Gastrocnemius medialis (tissue), 4 donors: ENCODE measurements at regions of chr11 and their contacts with region 1.

Region 1: GRCh38 chr11:93895106-93895862 is 44.9 kb upstream of the VSTM5 start:
- DNase-seq: no peak
- ATAC-seq: no peak
- H3K4me3 ChIP-seq: no peak overlapping the region
- H3K27ac ChIP-seq: no peak overlapping the region
- H3K4me1 ChIP-seq: no peaks in the 10 kb centered on the region
- H3K27me3 ChIP-seq: no peaks in the 10 kb centered on the region
- CTCF ChIP-seq: peak in 3 of 5 experiments; percentile 39 to 55 (median 45)
- POLR2A ChIP-seq: no peak

Region 2: GRCh38 chr11:94417386-94417987 is 522.2 kb after region 1 on chr11:
- in situ Hi-C with region 1: loop called in 1 of 4 experiments (anchors 25 kb)
- intact Hi-C with region 1: no loop called
- DNase-seq: no peak
- ATAC-seq: no peak
- H3K4me3 ChIP-seq: no peak overlapping the region
- H3K27ac ChIP-seq: no peak overlapping the region
- H3K4me1 ChIP-seq: no peaks in the 10 kb centered on the region
- H3K27me3 ChIP-seq: no peaks in the 10 kb centered on the region
- CTCF ChIP-seq: peak in 3 of 5 experiments; percentile 5 to 32 (median 24)
- POLR2A ChIP-seq: no peak

Region 3: GRCh38 chr11:94504689-94505293 is 609.5 kb after region 1 on chr11:
- in situ Hi-C with region 1: loop called in 3 of 4 experiments (anchors 5 to 25 kb)
- intact Hi-C with region 1: loop called (anchors 2 kb)
- DNase-seq: no peak
- ATAC-seq: no peak
- H3K4me3 ChIP-seq: no peak overlapping the region
- H3K27ac ChIP-seq: no peak overlapping the region
- H3K4me1 ChIP-seq: no peaks in the 10 kb centered on the region
- H3K27me3 ChIP-seq: no peaks in the 10 kb centered on the region
- CTCF ChIP-seq: peak; percentile 24 to 59 (median 41)
- POLR2A ChIP-seq: no peak

Region 4: GRCh38 chr11:94511932-94512781 is 616.9 kb after region 1 on chr11 and contains the start of gene C11orf97:
- in situ Hi-C with region 1: loop called in 2 of 4 experiments (anchors 10 to 25 kb)
- intact Hi-C with region 1: no loop called
- DNase-seq: peak in 1 of 2 donors; percentile 4
- ATAC-seq: peak in 1 of 2 donors; percentile 30
- H3K4me3 ChIP-seq: peak within 1 kb of the TSS; percentile 45 to 54 (median 51)
- H3K27ac ChIP-seq: no peak within 1 kb of the TSS
- H3K4me1 ChIP-seq: peaks cover 0 to 9% of the 10 kb centered on the region in 2 donors
- H3K27me3 ChIP-seq: peaks cover 0 to 2% (median 0%) of the 10 kb centered on the region in 3 donors
- CTCF ChIP-seq: no peak
- POLR2A ChIP-seq: no peak
- total RNA-seq, gene C11orf97: not detected